Activated CD8-positive, alpha-beta T cell treated with anti-CD3 and anti-CD28 coated beads, Interleukin-2, amount 10 ng/mL, durations not matched to agents 7 days and 5 days (primary cell): ENCODE measurements at regions of chr2 and their contacts with region 1.

Region 1: DNA sequence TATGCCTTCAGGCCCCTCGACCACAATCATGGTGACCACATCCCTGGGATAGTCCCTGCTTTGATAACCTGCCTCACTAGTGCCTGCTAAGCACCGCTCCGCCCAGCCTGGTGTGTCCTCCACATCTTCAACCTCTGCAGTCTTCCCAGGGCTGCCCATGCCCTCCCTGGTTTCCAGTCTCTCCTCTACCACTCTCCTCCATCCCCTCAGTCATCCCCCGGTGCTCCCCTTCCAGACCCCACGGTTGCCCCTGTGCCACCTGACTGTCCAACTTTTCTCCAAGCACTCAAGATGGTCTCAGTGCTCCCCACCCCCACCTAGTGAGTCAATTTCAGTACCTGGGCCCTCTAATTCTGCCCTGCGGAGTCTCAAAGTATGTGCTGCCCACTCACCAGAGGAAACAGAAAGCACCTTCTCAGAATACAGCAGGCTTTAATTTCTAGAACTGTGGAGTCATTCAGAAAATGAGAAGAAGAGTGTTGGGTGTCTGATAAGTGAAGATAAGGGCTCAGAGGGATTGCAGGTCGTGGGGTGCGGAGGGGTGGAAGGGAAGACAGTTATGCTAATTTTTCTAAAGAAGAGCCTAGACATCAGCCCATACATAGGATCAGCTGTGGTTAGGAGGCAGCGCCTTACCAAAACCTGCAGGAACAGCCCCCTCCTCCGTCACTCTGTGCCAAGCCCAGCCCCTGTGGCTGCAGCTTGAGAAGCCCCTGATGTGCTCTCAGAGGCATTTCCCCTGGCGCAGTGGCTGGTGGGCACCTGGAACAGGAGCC is 53.6 kb upstream of the CAB39 start:
- DNase-seq: peak; percentile 90
- ATAC-seq: peak; percentile 65
- H3K4me3 Mint-ChIP-seq: peak overlapping the region; percentile 86
- H3K27ac Mint-ChIP-seq: peak overlapping the region; percentile 99
- H3K4me1 Mint-ChIP-seq: peaks cover 98% of the 10 kb centered on the region
- H3K27me3 Mint-ChIP-seq: no peaks in the 10 kb centered on the region

Region 2: DNA sequence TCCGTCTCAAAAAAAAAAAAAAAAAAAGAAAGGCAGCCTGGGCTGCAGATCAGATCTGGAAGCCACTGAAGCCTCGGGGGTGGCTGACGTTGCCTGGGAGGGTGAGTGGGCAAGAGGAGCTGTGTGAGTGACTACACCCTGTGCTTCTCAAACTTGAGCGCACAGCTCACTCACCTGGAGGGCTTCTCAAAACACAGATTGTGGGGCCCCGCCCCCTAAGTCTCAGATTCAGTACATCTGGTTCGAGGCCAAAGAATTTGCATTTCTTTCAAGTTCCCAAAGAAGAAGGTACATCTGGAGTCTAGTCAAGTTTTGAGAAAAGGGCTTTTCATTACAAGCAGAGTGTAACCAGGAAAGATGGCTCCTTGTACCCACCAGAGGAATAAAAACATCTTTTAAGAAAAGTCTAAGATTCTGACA is 44.1 kb before region 1 on chr2:
- CTCF ChIA-PET with region 1: interaction called, 17 read pairs
- POLR2A ChIA-PET with region 1: interaction called, 8 read pairs
- DNase-seq: peak; percentile 40
- ATAC-seq: peak; percentile 52
- H3K4me3 Mint-ChIP-seq: no peak overlapping the region
- H3K27ac Mint-ChIP-seq: peak overlapping the region; percentile 30
- H3K4me1 Mint-ChIP-seq: peaks cover 55% of the 10 kb centered on the region
- H3K27me3 Mint-ChIP-seq: no peaks in the 10 kb centered on the region

Region 3: DNA sequence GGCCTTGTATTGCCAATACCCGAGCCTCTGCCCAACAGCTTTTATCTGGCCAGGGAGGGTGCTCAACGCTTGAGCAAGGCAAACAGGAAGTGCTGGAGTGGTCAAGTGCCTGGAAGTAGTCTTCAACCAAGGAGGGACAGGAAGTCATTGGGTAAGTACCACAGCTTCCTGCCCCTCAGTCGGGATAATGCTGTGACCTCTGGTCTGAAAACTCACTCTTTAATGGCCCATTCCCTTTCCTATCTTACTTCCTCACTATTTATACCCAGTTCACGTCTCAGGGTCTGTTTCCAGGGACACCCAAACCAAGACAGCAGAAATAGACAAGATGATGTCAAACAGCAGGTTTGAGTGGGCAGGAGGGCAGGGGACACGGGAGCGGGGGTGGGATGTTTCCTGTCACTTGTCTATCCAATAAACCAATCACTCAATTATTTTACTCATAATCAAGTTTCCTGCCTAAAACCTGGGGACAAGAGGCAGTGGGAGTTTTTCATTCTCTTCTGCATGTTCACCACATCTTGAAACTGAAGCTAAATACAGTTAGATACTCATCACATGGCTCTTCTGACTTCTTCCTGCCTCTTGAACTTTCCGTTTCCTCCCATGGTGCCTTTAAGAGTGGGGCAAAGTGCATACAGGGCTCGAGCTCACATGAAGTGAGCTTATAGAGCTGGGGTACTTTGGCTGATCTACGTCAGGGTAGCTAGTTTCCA is 15.3 kb before region 1 on chr2:
- CTCF ChIA-PET with region 1: interaction called, 28 read pairs
- POLR2A ChIA-PET with region 1: interaction called, 83 read pairs
- DNase-seq: peak; percentile 70
- ATAC-seq: peak; percentile 96
- H3K4me3 Mint-ChIP-seq: peak overlapping the region; percentile 57
- H3K27ac Mint-ChIP-seq: peak overlapping the region; percentile 97
- H3K4me1 Mint-ChIP-seq: peaks cover 41% of the 10 kb centered on the region
- H3K27me3 Mint-ChIP-seq: no peaks in the 10 kb centered on the region

Region 4: GRCh38 chr2:230793572-230794359 is 134.7 kb after region 1 on chr2:
- CTCF ChIA-PET with region 1: interaction called, 24 read pairs
- POLR2A ChIA-PET with region 1: interaction called, 19 read pairs
- DNase-seq: peak; percentile 83
- ATAC-seq: peak; percentile 93
- H3K4me3 Mint-ChIP-seq: peak overlapping the region; percentile 65
- H3K27ac Mint-ChIP-seq: peak overlapping the region; percentile 89
- H3K4me1 Mint-ChIP-seq: peaks cover 49% of the 10 kb centered on the region
- H3K27me3 Mint-ChIP-seq: no peaks in the 10 kb centered on the region